Endothelial cell of umbilical vein (primary cell): ENCODE measurements at regions of chr12 and their contacts with region 1.

Region 1: GRCh38 chr12:49967042-49967776 is 5.5 kb downstream of the AQP5 start:
- DNase-seq: peak; percentile 79
- H3K4me3 ChIP-seq: peak overlapping the region in 2 of 3 experiments; percentile 14 to 24
- H3K27ac ChIP-seq: no peak overlapping the region
- H3K4me1 ChIP-seq: peaks cover 11% of the 10 kb centered on the region
- H3K27me3 ChIP-seq: peaks cover 16 to 18% of the 10 kb centered on the region in 2 experiments
- CTCF ChIP-seq: peak; percentile 76 to 98
- POLR2A ChIP-seq: no peak

Region 2: DNA sequence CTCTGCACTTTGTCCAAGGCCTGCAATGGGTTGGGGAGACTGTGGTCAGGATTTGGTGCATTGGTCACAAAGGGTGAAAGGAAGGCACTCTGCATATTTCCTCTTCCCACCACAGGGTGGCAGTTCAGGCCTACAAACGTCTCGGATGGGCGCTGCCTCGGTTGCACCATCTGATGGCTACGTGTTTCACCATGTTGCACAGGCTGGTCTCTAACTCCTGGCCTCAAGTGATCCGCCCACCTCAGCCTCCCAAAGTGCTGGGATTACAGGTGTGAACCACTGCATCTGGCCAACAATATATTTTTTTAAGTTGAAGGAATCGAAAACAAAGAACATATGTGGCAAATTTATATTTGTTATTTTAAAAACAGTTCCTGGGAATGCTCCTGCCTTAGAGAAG is 190.8 kb before region 1 on chr12:
- CTCF ChIA-PET with region 1: interaction called, 8 read pairs
- POLR2A ChIA-PET with region 1: no interaction called
- dilution Hi-C with region 1: no loop called
- intact Hi-C with region 1: loop called (anchors 2 kb)
- DNase-seq: peak; percentile 68
- H3K4me3 ChIP-seq: no peak overlapping the region
- H3K27ac ChIP-seq: no peak overlapping the region
- H3K4me1 ChIP-seq: no peaks in the 10 kb centered on the region
- H3K27me3 ChIP-seq: peaks cover 0 to 2% of the 10 kb centered on the region in 2 experiments
- CTCF ChIP-seq: peak; percentile 77 to 79
- POLR2A ChIP-seq: no peak

Region 3: DNA sequence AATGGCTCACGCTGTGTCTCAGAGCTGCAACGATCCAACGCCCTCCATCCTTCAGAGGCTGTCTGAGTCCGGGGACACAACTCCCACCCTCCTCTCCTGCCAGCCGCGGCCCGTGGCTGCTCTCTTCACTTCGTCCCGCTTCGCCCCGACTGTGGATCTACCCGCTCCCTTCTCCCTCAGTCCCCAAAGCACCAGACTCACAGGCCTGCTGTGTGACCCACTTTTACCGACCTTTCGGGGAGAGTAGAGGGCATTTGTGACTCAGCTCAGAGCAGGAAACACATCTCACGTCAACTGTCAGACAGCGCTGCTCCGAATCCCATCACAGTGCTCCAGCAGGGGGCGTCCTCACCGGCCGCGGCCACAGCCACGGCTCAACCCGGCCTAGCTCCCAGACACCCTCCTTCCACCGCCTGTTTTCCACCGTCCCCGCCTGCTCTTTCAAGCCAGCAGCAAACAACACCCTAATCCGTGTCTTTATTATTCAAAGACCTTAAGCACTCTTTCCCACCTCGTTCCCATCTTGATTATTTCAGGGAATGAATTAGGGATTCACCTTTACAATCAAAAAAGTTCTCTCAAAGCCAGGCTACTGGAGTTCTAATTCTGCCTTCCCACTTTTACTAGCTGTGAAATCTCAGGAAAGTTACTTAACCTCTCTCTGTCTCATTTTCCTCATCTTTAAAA is 21.7 kb before region 1 on chr12:
- CTCF ChIA-PET with region 1: interaction called, 112 read pairs
- POLR2A ChIA-PET with region 1: no interaction called
- dilution Hi-C with region 1: no loop called
- intact Hi-C with region 1: loop called (anchors 1 kb)
- DNase-seq: peak; percentile 89
- H3K4me3 ChIP-seq: no peak overlapping the region
- H3K27ac ChIP-seq: peak overlapping the region; percentile 49
- H3K4me1 ChIP-seq: peaks cover 11% of the 10 kb centered on the region
- H3K27me3 ChIP-seq: no peaks in the 10 kb centered on the region
- CTCF ChIP-seq: peak; percentile 96 to 97
- POLR2A ChIP-seq: no peak

Region 4: GRCh38 chr12:50025187-50026059 is 58.2 kb after region 1 on chr12 and contains the start of gene RACGAP1:
- CTCF ChIA-PET with region 1: interaction called, 18 read pairs
- POLR2A ChIA-PET with region 1: no interaction called
- dilution Hi-C with region 1: no loop called
- intact Hi-C with region 1: no loop called
- DNase-seq: peak; percentile 99
- H3K4me3 ChIP-seq: peak within 1 kb of the TSS; percentile 40 to 98 (median 64)
- H3K27ac ChIP-seq: peak within 1 kb of the TSS; percentile 16
- H3K4me1 ChIP-seq: peaks cover 10% of the 10 kb centered on the region
- H3K27me3 ChIP-seq: peaks cover 14 to 17% of the 10 kb centered on the region in 2 experiments
- CTCF ChIP-seq: no peak
- POLR2A ChIP-seq: peak; percentile 31
- total RNA-seq, gene RACGAP1: 56.3 and 62.9 TPM in 2 replicates

Region 5: GRCh38 chr12:50050410-50051098 is 83.3 kb after region 1 on chr12:
- CTCF ChIA-PET with region 1: interaction called, 168 read pairs
- POLR2A ChIA-PET with region 1: no interaction called
- dilution Hi-C with region 1: loop called (anchors 25 kb)
- intact Hi-C with region 1: no loop called
- DNase-seq: no peak
- H3K4me3 ChIP-seq: peak overlapping the region in 1 of 3 experiments; percentile 0
- H3K27ac ChIP-seq: no peak overlapping the region
- H3K4me1 ChIP-seq: no peaks in the 10 kb centered on the region
- H3K27me3 ChIP-seq: peaks cover 40 to 54% of the 10 kb centered on the region in 2 experiments
- CTCF ChIP-seq: no peak
- POLR2A ChIP-seq: no peak

Region 6: GRCh38 chr12:50174971-50175715 is 207.9 kb after region 1 on chr12:
- CTCF ChIA-PET with region 1: interaction called, 4 read pairs
- POLR2A ChIA-PET with region 1: no interaction called
- dilution Hi-C with region 1: no loop called
- intact Hi-C with region 1: loop called (anchors 5 kb)
- DNase-seq: peak; percentile 87
- H3K4me3 ChIP-seq: no peak overlapping the region
- H3K27ac ChIP-seq: no peak overlapping the region
- H3K4me1 ChIP-seq: no peaks in the 10 kb centered on the region
- H3K27me3 ChIP-seq: no peaks in the 10 kb centered on the region
- CTCF ChIP-seq: peak; percentile 27 to 38
- POLR2A ChIP-seq: no peak